Naive thymus-derived CD4-positive, alpha-beta T cell (primary cell): ENCODE measurements at regions of chr12 and their contacts with region 1.

Region 1: DNA sequence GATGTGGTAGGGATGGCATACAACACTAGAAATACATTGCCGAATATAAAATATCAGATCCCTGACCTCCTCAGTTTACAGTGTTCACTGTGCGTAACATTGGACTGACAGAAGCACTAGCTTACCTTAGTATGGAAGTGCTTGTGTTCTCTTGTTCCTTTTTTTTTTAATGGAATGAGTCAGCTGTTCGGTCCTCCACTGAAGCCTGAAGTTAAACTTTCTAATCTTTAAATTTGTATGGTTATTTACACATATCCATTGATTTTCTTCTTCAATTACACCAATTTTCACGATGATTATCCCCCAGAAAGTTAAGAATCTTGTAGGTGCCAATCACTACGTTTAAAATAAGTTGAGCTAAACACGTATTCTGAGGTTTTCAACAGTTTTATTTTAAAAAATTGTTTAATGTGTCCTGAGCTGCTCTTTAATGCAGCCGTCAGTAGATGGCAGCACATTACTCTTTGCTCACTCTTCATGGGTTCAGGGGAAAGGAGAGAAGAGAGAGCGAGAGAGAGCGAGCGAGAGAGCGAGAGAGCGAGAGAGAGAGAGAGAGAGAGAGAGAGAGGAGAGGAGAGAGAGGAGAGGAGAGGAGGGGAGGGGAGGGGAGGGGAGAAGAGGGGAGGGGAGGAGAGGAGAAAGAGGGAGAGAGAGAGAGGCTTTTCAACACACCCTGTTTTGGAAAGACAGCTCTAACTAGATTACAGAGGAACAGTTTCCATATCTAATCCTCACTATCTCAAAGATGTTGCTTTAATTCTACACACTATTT is 134.7 kb upstream of the SCAF11 start:
- DNase-seq: peak in 7 of 9 donors; percentile 45 to 68 (median 57)
- ATAC-seq: peak; percentile 99
- H3K4me3 ChIP-seq: no peak overlapping the region
- H3K4me3 Mint-ChIP-seq: peak overlapping the region in 9 of 10 donors; percentile 50 to 81 (median 67)
- H3K27ac ChIP-seq: no peak overlapping the region
- H3K27ac Mint-ChIP-seq: peak overlapping the region; percentile 40 to 93 (median 85)
- H3K4me1 ChIP-seq: peaks cover 0 to 3% of the 10 kb centered on the region in 2 donors
- H3K4me1 Mint-ChIP-seq: peaks cover 3 to 7% (median 6%) of the 10 kb centered on the region in 7 donors
- H3K27me3 ChIP-seq: no peaks in the 10 kb centered on the region
- H3K27me3 Mint-ChIP-seq: peaks cover 0 to 45% (median 0%) of the 10 kb centered on the region in 5 donors

Region 2: DNA sequence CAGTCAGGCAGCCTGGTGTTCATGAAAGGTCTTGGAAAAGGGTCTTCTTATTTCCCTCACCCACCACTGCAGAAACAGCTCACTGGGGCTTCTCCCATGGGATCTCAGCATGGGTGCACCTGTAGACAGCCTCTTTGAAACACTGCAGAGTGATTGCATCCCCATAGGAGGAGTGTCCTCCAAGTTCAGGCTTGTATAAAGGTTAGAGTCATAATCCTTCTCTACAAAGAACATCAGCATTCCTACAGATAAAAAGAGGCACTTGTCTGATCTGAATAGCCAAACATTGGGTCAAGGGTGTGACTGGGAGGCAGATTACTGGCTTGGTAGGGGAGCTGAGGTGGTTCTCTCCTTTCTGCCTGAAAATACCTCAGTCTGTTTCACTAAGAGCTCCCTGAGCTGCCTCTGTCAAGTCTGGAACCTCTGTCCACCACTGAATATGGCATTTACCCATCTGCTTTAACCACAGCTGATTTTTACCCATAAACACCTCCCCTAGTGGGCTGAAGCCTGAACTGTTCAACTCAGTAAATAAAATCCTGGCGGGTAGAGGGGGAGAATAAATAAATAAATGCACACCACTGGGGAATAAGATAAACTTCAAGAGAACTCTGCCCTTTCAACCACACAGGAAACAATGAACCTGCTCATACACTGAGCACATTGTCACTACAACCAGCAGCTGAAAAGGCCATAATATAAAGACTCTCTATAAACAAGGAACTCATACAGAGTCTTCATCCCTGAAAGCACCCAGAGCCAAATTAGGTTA is 13.9 kb before region 1 on chr12:
- CTCF ChIA-PET with region 1: interaction called, 13 read pairs
- POLR2A ChIA-PET with region 1: no interaction called
- intact Hi-C with region 1: no loop called
- DNase-seq: no peak
- ATAC-seq: no peak
- H3K4me3 ChIP-seq: no peak overlapping the region
- H3K4me3 Mint-ChIP-seq: no peak overlapping the region
- H3K27ac ChIP-seq: no peak overlapping the region
- H3K27ac Mint-ChIP-seq: no peak overlapping the region
- H3K4me1 ChIP-seq: no peaks in the 10 kb centered on the region
- H3K4me1 Mint-ChIP-seq: no peaks in the 10 kb centered on the region
- H3K27me3 ChIP-seq: no peaks in the 10 kb centered on the region
- H3K27me3 Mint-ChIP-seq: peaks cover 0 to 20% (median 4%) of the 10 kb centered on the region in 5 donors

Region 3: GRCh38 chr12:46217541-46218321 is 92.7 kb after region 1 on chr12:
- CTCF ChIA-PET with region 1: no interaction called
- POLR2A ChIA-PET with region 1: no interaction called
- intact Hi-C with region 1: no loop called
- DNase-seq: peak in 8 of 9 donors; percentile 58 to 87 (median 84)
- ATAC-seq: peak; percentile 54
- H3K4me3 ChIP-seq: peak overlapping the region; percentile 41
- H3K4me3 Mint-ChIP-seq: peak overlapping the region; percentile 74 to 89 (median 81)
- H3K27ac ChIP-seq: peak overlapping the region; percentile 78
- H3K27ac Mint-ChIP-seq: peak overlapping the region; percentile 89 to 100 (median 99)
- H3K4me1 ChIP-seq: peaks cover 95% of the 10 kb centered on the region in 2 donors
- H3K4me1 Mint-ChIP-seq: peaks cover 69 to 100% (median 98%) of the 10 kb centered on the region in 7 donors
- H3K27me3 ChIP-seq: no peaks in the 10 kb centered on the region
- H3K27me3 Mint-ChIP-seq: no peaks in the 10 kb centered on the region

Region 4: DNA sequence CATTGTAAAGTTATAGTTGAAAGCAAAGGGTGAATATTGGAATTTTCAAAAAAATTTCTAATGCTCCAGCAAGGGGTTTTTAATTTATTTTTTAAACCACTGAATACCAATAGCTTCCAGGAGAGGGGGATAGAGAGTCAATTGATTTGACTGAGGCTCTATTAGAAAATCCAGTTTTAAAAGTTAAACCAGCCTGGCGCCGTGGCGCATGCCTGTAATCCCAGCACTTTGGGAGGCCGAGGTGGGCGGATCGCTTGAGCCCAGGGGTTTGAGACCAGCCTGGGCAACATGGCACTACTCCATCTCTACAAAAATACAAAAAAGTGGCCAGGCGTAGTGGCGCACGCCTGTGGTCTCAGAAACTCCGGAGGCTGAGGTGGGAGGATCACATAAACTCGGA is 550.7 kb after region 1 on chr12:
- CTCF ChIA-PET with region 1: interaction called, 6 read pairs
- POLR2A ChIA-PET with region 1: no interaction called
- intact Hi-C with region 1: loop called (anchors 1 to 2 kb)
- DNase-seq: peak in 5 of 9 donors; percentile 24 to 38 (median 34)
- ATAC-seq: no peak
- H3K4me3 ChIP-seq: no peak overlapping the region
- H3K4me3 Mint-ChIP-seq: no peak overlapping the region
- H3K27ac ChIP-seq: no peak overlapping the region
- H3K27ac Mint-ChIP-seq: no peak overlapping the region
- H3K4me1 ChIP-seq: no peaks in the 10 kb centered on the region
- H3K4me1 Mint-ChIP-seq: peaks cover 0 to 16% (median 0%) of the 10 kb centered on the region in 7 donors
- H3K27me3 ChIP-seq: no peaks in the 10 kb centered on the region
- H3K27me3 Mint-ChIP-seq: peaks cover 0 to 3% (median 0%) of the 10 kb centered on the region in 5 donors

Region 5: DNA sequence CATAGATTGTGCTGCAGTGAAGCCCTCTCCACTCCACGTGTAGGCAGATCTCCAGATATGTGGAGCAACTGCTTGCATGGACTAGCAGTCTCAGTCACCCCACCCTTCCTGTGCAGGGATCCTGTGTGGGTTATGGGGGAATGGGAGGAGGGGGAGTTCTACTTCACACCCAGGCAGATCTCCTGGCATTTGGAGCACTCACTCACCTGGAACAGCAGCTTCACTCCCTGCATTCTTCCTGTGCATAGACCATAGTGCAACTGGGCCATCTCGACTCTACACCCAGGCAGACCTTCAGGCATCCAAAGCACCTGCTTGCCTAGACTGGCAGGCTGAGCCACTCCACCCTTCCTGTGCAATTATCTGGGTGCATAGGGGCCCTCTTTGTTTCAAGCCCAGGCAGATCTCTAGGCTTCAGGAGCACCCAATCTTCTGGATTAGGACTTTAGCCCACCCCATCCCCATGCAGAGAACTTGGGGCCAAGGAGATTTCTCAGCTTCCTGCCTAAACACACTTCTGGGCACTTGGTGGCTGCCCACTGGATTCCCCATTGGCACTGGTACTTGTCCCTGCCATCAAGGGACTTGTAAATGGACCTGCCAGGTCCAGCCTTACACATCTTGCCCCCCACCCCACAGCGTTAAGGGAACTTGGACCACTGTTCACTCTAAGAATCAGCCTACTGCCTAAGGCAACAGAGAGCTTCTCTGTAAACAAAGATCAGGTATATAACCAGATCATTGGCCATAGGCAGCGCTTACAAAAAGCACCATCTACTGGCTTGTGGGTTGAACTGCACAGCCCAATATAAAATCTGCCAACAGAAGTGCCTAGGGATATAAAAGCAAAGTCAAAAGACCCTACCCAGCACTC is 858.6 kb after region 1 on chr12:
- CTCF ChIA-PET with region 1: interaction called, 5 read pairs
- POLR2A ChIA-PET with region 1: no interaction called
- intact Hi-C with region 1: loop called (anchors 1 kb)
- DNase-seq: peak in 6 of 9 donors; percentile 5 to 54 (median 31)
- ATAC-seq: peak; percentile 74
- H3K4me3 ChIP-seq: no peak overlapping the region
- H3K4me3 Mint-ChIP-seq: peak overlapping the region in 1 of 10 donors; percentile 13
- H3K27ac ChIP-seq: no peak overlapping the region
- H3K27ac Mint-ChIP-seq: peak overlapping the region in 1 of 9 donors; percentile 6
- H3K4me1 ChIP-seq: peaks cover 3 to 8% of the 10 kb centered on the region in 2 donors
- H3K4me1 Mint-ChIP-seq: peaks cover 0 to 10% (median 9%) of the 10 kb centered on the region in 7 donors
- H3K27me3 ChIP-seq: no peaks in the 10 kb centered on the region
- H3K27me3 Mint-ChIP-seq: peaks cover 17 to 29% (median 26%) of the 10 kb centered on the region in 5 donors

Region 6: GRCh38 chr12:47021298-47021697 is 896.3 kb after region 1 on chr12:
- CTCF ChIA-PET with region 1: interaction called, 16 read pairs
- POLR2A ChIA-PET with region 1: interaction called, 3 read pairs
- intact Hi-C with region 1: loop called (anchors 1 kb)
- DNase-seq: peak in 7 of 9 donors; percentile 7 to 55 (median 51)
- ATAC-seq: peak; percentile 68
- H3K4me3 ChIP-seq: no peak overlapping the region
- H3K4me3 Mint-ChIP-seq: no peak overlapping the region
- H3K27ac ChIP-seq: no peak overlapping the region
- H3K27ac Mint-ChIP-seq: no peak overlapping the region
- H3K4me1 ChIP-seq: no peaks in the 10 kb centered on the region
- H3K4me1 Mint-ChIP-seq: no peaks in the 10 kb centered on the region
- H3K27me3 ChIP-seq: peaks cover 0 to 3% of the 10 kb centered on the region in 2 donors
- H3K27me3 Mint-ChIP-seq: peaks cover 4 to 31% (median 10%) of the 10 kb centered on the region in 5 donors